Ascending aorta (tissue), 2 donors: ENCODE measurements at regions of chr2 and their contacts with region 1.

Region 1: DNA sequence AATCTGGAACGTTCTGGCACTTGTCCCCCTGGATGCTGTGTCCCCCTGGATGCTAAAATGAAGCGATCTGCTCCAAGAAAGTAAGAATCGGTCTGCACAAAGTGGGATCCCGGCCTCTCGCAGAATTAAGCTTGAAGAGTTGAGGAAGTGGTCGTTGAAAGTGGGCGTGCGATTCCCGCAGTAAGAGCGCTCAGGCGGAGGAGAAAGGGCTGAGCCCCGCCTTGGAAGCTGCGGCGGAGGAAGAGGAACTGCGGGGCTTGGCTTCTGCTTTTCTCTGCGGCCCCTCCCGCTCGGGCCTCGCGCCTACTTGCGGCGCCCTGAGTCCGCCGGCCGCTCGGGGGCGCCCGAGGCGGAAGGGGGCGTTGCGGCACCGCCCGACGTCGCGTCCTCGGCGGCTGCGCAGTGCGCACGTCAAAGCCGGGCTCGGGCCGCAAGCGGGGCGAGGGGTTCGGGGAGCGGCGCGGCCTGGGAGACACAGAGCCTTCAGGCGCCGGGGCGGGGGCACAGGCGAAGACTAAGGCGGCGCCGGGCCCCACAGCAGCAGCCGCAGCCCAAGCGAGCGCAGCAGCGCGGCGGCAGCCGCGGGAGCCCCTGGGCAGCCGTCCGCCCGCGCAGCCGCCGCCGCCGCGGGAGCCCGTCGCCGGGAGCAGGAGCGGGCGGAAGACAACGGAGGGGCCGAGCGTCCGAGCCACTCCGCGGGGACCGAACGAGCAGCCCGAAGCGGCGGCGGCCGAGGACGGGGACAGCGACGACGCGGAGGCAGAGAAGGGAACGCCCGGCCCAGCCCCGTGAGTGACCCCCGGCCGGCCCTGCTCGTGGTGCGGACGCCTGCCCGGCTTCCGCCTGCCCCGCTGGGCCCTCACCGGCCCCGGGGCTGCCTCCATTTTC is at the start of gene CAB39:
- DNase-seq: peak; percentile 54 to 92
- H3K4me3 ChIP-seq: peak within 1 kb of the TSS; percentile 66 to 99
- H3K27ac ChIP-seq: peak within 1 kb of the TSS; percentile 97 to 99
- H3K4me1 ChIP-seq: peaks cover 14 to 28% of the 10 kb centered on the region in 2 donors
- H3K27me3 ChIP-seq: no peaks in the 10 kb centered on the region
- CTCF ChIP-seq: peak; percentile 49 to 93 (median 75)
- total RNA-seq, gene CAB39: 62.9 TPM

Region 2: DNA sequence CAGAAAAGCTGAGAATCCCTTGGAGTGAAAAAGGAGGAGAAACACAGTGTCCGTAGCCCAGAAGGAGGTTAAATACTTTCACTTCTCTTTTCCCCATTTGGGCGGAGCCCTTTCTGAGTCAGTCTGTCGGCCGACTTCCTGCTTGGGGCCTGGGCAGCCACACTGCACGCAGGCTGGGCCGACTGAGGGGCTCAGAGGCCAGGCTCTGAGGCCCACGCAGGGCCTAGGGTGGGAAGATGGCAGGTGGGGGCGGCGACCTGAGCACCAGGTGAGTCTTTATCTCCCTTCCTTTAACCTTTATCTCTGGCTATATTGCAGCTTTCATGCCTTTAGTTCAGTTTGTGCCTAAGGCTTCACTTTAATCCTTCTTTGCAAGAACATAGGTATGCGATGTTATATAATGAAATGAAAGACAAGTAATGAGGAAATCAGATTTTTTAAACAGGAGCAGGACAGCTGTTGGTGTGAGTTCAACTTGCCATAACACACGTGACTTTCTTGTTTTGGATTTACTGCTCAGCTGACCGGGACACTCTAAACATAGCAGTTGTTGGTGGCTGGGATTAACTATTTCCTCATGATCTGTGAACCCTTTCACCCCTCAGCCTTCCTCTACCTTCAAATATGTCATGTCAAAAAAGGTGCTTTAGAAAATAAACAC is 296.5 kb before region 1 on chr2 and contains the start of gene SP100:
- intact Hi-C with region 1: loop called (anchors 5 kb)
- DNase-seq: peak; percentile 33 to 91
- H3K4me3 ChIP-seq: peak within 1 kb of the TSS; percentile 69 to 83
- H3K27ac ChIP-seq: peak within 1 kb of the TSS; percentile 89 to 95
- H3K4me1 ChIP-seq: peaks cover 2 to 39% of the 10 kb centered on the region in 2 donors
- H3K27me3 ChIP-seq: no peaks in the 10 kb centered on the region
- CTCF ChIP-seq: no peak
- total RNA-seq, gene SP100: 82.0 TPM

Region 3: DNA sequence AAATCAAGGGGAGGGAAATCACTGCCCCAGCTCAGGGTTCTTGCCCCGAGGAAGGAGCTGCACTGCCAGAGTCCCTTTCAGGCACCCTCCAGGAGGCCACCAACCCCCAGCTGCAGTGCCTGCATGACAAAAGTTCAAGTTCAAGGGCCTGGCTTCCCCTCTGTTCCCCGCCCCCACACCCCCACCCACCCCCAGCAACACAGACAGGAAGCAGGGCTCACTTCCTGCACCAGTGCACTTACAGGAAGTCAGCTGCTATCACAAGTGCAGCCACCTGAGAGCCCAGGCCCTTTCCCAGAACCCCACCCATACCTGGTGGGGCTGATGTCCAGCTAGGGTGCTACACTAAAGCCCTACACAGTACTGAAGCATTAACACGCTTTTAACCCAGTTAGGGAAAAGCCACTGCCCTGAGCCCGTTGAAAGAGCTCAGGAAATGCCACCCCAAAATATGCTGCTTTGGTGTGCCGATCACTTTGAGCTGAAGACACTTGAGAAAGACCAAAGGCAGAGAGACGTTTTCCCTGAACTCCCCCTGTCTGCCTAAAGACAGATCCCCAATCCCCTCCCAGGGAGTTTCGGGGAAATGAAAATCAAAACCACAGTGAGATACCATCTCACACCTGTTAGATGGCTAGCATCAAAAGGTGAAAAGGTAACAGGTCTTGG is 110.0 kb before region 1 on chr2:
- intact Hi-C with region 1: no loop called
- DNase-seq: no peak
- H3K4me3 ChIP-seq: no peak overlapping the region
- H3K27ac ChIP-seq: no peak overlapping the region
- H3K4me1 ChIP-seq: no peaks in the 10 kb centered on the region
- H3K27me3 ChIP-seq: no peaks in the 10 kb centered on the region
- CTCF ChIP-seq: no peak

Region 4: GRCh38 chr2:230758566-230759480 is 46.1 kb after region 1 on chr2:
- intact Hi-C with region 1: loop called (anchors 5 kb)
- DNase-seq: no peak
- H3K4me3 ChIP-seq: no peak overlapping the region
- H3K27ac ChIP-seq: peak overlapping the region; percentile 62 to 70
- H3K4me1 ChIP-seq: peaks cover 10 to 32% of the 10 kb centered on the region in 2 donors
- H3K27me3 ChIP-seq: no peaks in the 10 kb centered on the region
- CTCF ChIP-seq: no peak

Region 5: DNA sequence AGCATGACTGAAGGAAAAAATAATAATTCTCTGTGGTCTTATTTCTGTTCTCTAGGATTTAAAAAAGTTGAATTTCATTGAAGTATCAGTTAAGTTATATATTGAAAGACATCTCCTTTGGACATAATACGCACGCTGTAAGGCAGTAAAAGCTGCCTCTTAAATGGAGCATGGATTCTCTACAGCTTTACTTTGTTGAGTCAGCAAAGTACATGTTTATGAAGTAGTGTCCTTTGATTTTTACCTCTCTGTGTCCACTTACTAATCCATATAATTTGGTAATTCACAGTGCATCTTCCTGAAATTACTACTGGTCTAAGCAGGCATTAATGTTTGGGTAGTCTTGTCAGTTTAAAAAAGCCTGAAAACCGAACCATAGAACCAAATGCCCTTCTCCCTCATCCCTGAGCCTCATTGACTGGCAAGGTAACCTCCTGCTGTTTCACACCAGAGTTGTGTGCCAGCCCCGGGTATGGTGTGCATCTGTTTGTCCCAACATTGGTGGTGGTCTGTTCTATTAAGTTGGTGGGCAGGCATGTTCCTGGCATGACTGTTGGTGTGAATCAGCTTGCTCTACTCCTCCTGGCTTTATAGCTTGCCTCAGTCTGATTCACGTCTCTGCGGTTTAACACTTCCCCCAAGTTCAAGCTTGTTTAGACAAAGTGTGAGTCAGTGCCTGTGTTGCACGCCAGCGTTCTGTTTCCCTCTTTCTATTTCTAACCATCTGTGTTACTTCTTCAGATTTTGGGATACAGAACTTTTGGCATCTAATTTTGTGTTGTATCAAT is 81.1 kb after region 1 on chr2:
- intact Hi-C with region 1: loop called (anchors 1 kb)
- DNase-seq: peak; percentile 73 to 92
- H3K4me3 ChIP-seq: no peak overlapping the region
- H3K27ac ChIP-seq: peak overlapping the region; percentile 71 to 89
- H3K4me1 ChIP-seq: peaks cover 14 to 28% of the 10 kb centered on the region in 2 donors
- H3K27me3 ChIP-seq: no peaks in the 10 kb centered on the region
- CTCF ChIP-seq: no peak

Region 6: DNA sequence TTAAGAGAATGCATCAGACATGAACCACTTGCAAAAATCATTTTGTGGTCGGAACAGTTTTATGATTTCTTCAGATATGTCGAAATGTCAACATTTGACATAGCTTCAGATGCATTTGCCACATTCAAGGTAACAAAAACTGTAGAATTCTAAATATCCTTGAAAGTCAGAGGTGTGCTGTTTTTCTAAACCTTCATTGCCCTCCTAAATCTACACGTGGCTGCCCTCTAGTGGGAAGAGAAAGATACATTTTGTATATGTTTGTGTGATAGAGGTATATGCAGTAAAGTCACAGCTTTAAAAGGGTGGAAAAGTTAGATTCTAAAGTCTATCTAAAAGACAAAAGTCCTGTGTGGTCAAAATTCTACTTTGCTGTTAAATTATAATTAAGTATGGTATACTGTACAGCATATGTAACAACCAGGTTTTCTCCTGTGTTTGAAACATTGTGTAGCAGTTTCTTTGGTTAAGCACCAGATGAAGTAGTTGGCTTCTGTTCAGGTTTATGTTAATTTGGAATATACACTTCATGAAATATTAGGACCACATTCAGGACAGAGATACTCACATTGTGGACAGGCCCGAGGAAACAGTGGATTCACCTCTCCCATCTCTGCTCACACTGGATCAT is 86.2 kb after region 1 on chr2:
- intact Hi-C with region 1: loop called (anchors 1 kb)
- DNase-seq: no peak
- H3K4me3 ChIP-seq: no peak overlapping the region
- H3K27ac ChIP-seq: no peak overlapping the region
- H3K4me1 ChIP-seq: peaks cover 8 to 21% of the 10 kb centered on the region in 2 donors
- H3K27me3 ChIP-seq: no peaks in the 10 kb centered on the region
- CTCF ChIP-seq: peak; percentile 60 to 72 (median 69)

Region 7: DNA sequence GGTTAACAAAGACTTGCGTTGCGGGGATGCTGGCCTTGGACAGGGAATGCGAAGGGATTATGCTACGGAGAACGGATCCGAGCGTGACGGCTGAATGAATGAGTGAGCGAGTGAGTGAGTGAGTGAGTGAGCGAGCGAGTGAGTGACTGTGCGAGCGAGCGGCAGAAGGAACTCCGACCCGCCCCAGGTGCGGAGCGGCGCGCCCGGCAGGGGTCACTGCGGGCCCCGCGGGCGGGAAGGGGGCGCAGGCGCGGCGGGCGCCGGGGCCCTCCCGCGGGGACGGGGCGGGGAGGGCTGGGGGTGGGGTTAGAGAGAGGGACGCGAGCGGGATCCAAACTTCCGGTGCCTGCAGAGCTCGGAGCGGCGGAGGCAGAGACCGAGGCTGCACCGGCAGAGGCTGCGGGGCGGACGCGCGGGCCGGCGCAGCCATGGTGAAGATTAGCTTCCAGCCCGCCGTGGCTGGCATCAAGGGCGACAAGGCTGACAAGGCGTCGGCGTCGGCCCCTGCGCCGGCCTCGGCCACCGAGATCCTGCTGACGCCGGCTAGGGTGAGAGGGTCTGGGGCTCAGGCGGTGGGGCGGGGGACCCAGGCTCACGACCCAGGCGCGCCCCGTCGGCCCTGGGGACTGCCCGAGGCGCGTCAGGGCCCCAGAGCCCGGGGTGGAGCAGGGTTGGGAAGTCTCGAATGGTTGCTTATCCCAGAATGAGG is 152.1 kb after region 1 on chr2 and contains the start of gene ITM2C:
- intact Hi-C with region 1: loop called (anchors 5 kb)
- DNase-seq: peak in 1 of 2 donors; percentile 79
- H3K4me3 ChIP-seq: peak within 1 kb of the TSS; percentile 84 to 96
- H3K27ac ChIP-seq: peak within 1 kb of the TSS; percentile 38 to 57
- H3K4me1 ChIP-seq: peaks cover 3 to 11% of the 10 kb centered on the region in 2 donors
- H3K27me3 ChIP-seq: no peaks in the 10 kb centered on the region
- CTCF ChIP-seq: peak in 2 of 3 experiments; percentile 29 to 32
- total RNA-seq, gene ITM2C: 84.9 TPM